Posterior vena cava (tissue), 2 donors: ENCODE measurements at regions of chr2 and their contacts with region 1.

Region 1: GRCh38 chr2:1817256-1818051 is 73.1 kb upstream of the PXDN start:
- DNase-seq: peak; percentile 96

Region 2: GRCh38 chr2:677056-677965 is 1140.1 kb before region 1 on chr2 and contains the start of gene TMEM18:
- intact Hi-C with region 1: loop called in 1 of 2 experiments (anchors 5 kb)
- DNase-seq: no peak
- total RNA-seq, gene TMEM18: 15.7 to 19.2 TPM

Region 3: DNA sequence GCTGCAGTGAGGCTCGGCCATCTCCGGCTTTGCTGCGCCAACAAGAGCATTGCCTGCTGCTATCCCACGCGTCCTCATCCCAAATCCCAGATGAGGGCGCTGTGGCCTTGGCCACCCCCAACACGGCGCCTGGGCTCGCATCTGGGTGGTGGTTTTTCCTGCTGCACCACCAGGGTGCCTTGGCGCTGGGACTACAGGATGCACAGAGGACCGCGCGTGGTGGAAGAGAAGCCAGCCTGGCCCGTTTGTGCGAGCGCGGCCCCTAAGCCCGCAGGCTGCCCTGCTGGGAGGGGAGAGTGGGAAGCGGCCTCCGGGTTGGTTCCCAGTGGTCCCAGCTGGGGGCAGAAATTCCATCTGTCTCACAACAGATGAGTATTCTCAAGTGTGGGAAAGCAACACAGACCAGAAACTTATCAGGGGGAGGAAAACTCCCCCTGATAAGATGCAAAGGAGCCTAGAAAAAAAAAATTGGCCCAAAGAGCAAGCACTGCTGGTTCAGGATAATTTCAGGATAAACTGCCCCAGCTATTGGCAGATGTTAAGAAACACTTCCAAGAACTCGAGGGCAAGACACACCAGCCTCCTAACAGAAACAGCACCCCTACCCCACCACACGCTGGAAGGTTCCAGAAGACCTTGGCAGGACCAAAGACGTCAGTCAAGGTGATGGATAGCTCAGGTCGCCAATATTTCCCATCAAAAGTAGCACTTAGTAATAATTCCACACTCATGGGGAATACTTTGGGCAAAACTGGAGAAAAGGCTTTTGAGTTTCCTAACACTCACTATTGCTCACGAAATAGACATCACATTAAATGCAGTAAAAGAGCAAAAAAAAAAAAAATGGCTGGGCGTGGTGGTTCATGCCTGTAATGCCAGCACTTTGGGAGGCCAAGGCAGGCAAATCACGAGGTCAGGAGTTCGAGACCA is 225.2 kb before region 1 on chr2:
- intact Hi-C with region 1: loop called in 1 of 2 experiments (anchors 10 kb)
- DNase-seq: peak; percentile 92